CD8-positive, alpha-beta T cell (primary cell): ENCODE measurements at regions of chr12 and their contacts with region 1.

Region 1: DNA sequence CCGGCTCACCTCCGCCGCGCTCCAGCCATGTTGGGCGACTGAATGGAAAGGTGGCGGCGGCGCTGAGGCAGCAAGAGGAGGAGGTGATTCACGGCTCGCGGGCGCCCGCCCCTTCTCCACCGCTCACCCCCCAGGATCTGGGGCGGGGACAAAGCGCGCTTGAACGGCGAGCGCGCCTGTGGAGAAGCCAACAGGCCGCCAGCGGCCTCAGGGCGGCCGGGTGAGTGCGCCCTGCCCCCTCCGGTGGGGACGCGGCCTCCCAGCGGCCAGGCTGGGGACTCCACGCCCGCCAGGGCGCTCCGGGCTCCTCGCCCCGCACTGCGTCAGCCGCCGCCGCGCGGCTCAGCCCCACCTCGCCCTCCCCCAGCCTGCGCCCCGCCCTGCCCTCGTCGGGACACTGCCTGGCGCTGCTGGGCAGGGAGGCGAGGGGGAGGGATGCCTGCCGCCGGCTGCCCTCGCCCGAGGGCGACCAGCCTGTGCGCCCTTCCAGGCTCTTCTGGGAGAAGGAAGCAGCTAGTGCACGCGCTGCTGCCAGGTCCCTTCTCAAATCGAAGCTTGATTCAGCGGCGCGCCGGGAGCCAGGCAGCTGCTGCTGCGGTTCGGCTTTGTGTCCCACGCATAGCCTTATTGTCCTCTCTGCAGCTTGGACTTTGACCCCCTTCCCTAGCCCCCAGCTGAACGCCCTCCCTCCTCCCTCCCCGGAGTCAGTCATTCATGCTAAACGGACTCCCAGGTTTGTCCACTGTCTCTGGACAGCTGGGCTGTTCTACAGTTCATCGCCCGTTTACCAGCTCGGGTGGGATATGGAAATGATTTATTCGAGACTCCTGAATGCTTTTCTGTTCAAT is at the start of gene KIF21A:
- DNase-seq: peak; percentile 78 to 96 (median 86)
- ATAC-seq: peak; percentile 87
- H3K4me3 ChIP-seq: peak within 1 kb of the TSS; percentile 74 to 84
- H3K4me3 Mint-ChIP-seq: peak within 1 kb of the TSS; percentile 96
- H3K27ac ChIP-seq: peak within 1 kb of the TSS; percentile 55 to 74
- H3K27ac Mint-ChIP-seq: peak within 1 kb of the TSS; percentile 90
- H3K4me1 ChIP-seq: peaks cover 16% of the 10 kb centered on the region
- H3K4me1 Mint-ChIP-seq: peaks cover 18% of the 10 kb centered on the region
- H3K27me3 ChIP-seq: no peaks in the 10 kb centered on the region
- H3K27me3 Mint-ChIP-seq: peaks cover 6% of the 10 kb centered on the region
- CTCF ChIP-seq: peak; percentile 35
- total RNA-seq, gene KIF21A: 5.1 to 6.0 TPM

Region 2: DNA sequence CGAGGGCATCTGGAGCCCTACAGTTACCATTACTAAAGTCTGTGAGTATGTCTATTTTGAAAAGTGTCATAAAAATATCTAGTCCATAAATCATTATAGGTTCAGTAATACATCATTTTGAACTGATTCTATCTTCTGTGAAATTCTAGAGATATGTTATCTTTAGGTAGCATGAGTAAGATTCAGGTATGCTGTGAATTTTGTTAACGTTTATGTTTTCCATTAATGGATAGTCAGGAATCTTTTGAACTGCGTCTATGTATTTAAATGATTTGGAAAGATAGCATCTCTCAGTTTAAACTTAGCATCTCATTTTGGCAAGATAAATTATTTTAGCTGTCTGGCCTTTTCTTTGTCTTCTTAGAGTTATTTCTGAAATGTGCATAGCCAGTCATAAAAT is 1118.4 kb before region 1 on chr12:
- CTCF ChIA-PET with region 1: no interaction called
- POLR2A ChIA-PET with region 1: no interaction called
- intact Hi-C with region 1: loop called in 1 of 2 experiments (anchors 10 kb)
- DNase-seq: no peak
- ATAC-seq: no peak
- H3K4me3 ChIP-seq: no peak overlapping the region
- H3K4me3 Mint-ChIP-seq: no peak overlapping the region
- H3K27ac ChIP-seq: no peak overlapping the region
- H3K27ac Mint-ChIP-seq: no peak overlapping the region
- H3K4me1 ChIP-seq: no peaks in the 10 kb centered on the region
- H3K4me1 Mint-ChIP-seq: peaks cover 5% of the 10 kb centered on the region
- H3K27me3 ChIP-seq: no peaks in the 10 kb centered on the region
- H3K27me3 Mint-ChIP-seq: no peaks in the 10 kb centered on the region
- CTCF ChIP-seq: no peak

Region 3: GRCh38 chr12:38646146-38646545 is 797.2 kb before region 1 on chr12:
- CTCF ChIA-PET with region 1: no interaction called
- POLR2A ChIA-PET with region 1: no interaction called
- intact Hi-C with region 1: no loop called
- DNase-seq: no peak
- ATAC-seq: no peak
- H3K4me3 ChIP-seq: no peak overlapping the region
- H3K4me3 Mint-ChIP-seq: no peak overlapping the region
- H3K27ac ChIP-seq: no peak overlapping the region
- H3K27ac Mint-ChIP-seq: no peak overlapping the region
- H3K4me1 ChIP-seq: no peaks in the 10 kb centered on the region
- H3K4me1 Mint-ChIP-seq: no peaks in the 10 kb centered on the region
- H3K27me3 ChIP-seq: no peaks in the 10 kb centered on the region
- H3K27me3 Mint-ChIP-seq: no peaks in the 10 kb centered on the region
- CTCF ChIP-seq: no peak

Region 4: DNA sequence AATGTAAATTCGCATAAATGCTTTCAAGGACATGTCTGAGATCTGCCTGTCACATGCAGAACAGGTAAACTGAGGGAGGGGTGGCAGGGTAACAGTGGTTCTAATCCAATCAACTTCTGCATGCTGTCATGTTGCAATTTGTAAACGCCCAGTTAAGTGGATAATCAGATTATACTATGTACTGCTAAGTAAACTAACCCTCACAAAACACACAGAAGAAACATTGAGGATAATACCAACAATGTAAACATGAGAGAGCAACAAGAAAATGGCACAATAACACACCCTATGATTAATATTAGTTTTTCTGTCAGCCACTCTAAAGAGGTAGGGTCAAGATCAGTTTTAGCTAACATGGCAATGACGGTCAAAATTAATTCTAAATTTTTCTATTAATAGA is 124.1 kb before region 1 on chr12:
- CTCF ChIA-PET with region 1: no interaction called
- POLR2A ChIA-PET with region 1: no interaction called
- intact Hi-C with region 1: loop called in 1 of 2 experiments (anchors 1 kb)
- DNase-seq: no peak
- ATAC-seq: no peak
- H3K4me3 ChIP-seq: no peak overlapping the region
- H3K4me3 Mint-ChIP-seq: no peak overlapping the region
- H3K27ac ChIP-seq: no peak overlapping the region
- H3K27ac Mint-ChIP-seq: no peak overlapping the region
- H3K4me1 ChIP-seq: no peaks in the 10 kb centered on the region
- H3K4me1 Mint-ChIP-seq: no peaks in the 10 kb centered on the region
- H3K27me3 ChIP-seq: no peaks in the 10 kb centered on the region
- H3K27me3 Mint-ChIP-seq: no peaks in the 10 kb centered on the region
- CTCF ChIP-seq: no peak

Region 5: GRCh38 chr12:39329018-39329417 is 114.3 kb before region 1 on chr12:
- CTCF ChIA-PET with region 1: no interaction called
- POLR2A ChIA-PET with region 1: interaction called, 10 read pairs
- intact Hi-C with region 1: no loop called
- DNase-seq: no peak
- ATAC-seq: no peak
- H3K4me3 ChIP-seq: no peak overlapping the region
- H3K4me3 Mint-ChIP-seq: no peak overlapping the region
- H3K27ac ChIP-seq: no peak overlapping the region
- H3K27ac Mint-ChIP-seq: no peak overlapping the region
- H3K4me1 ChIP-seq: peaks cover 10% of the 10 kb centered on the region
- H3K4me1 Mint-ChIP-seq: peaks cover 15% of the 10 kb centered on the region
- H3K27me3 ChIP-seq: no peaks in the 10 kb centered on the region
- H3K27me3 Mint-ChIP-seq: no peaks in the 10 kb centered on the region
- CTCF ChIP-seq: no peak

Region 6: DNA sequence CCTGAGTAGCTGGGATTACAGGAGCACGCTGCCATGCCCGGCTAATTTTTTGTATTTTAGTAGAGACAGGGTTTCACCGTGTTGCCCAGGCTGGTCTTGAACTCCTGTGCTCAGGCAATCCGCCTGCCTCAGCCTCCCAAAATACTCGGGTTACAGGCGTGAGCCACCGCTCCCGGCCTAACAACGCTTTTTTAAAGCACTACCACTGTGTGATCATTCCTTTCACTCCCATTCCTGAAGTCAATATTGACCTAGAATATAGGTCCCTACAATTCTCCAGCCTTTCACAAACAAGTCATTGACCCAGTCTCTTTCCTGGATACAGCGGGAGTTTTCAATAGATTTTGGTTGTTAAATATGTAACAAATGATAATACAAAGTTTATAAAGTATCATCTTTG is 63.2 kb before region 1 on chr12:
- CTCF ChIA-PET with region 1: no interaction called
- POLR2A ChIA-PET with region 1: no interaction called
- intact Hi-C with region 1: loop called in 1 of 2 experiments (anchors 5 kb)
- DNase-seq: no peak
- ATAC-seq: no peak
- H3K4me3 ChIP-seq: no peak overlapping the region
- H3K4me3 Mint-ChIP-seq: no peak overlapping the region
- H3K27ac ChIP-seq: no peak overlapping the region
- H3K27ac Mint-ChIP-seq: no peak overlapping the region
- H3K4me1 ChIP-seq: no peaks in the 10 kb centered on the region
- H3K4me1 Mint-ChIP-seq: no peaks in the 10 kb centered on the region
- H3K27me3 ChIP-seq: no peaks in the 10 kb centered on the region
- H3K27me3 Mint-ChIP-seq: no peaks in the 10 kb centered on the region
- CTCF ChIP-seq: no peak

Region 7: GRCh38 chr12:39476118-39476517 is 32.8 kb after region 1 on chr12:
- CTCF ChIA-PET with region 1: no interaction called
- POLR2A ChIA-PET with region 1: no interaction called
- intact Hi-C with region 1: no loop called
- DNase-seq: peak in 2 of 9 experiments; percentile 5 to 7
- ATAC-seq: no peak
- H3K4me3 ChIP-seq: no peak overlapping the region
- H3K4me3 Mint-ChIP-seq: no peak overlapping the region
- H3K27ac ChIP-seq: no peak overlapping the region
- H3K27ac Mint-ChIP-seq: no peak overlapping the region
- H3K4me1 ChIP-seq: no peaks in the 10 kb centered on the region
- H3K4me1 Mint-ChIP-seq: no peaks in the 10 kb centered on the region
- H3K27me3 ChIP-seq: no peaks in the 10 kb centered on the region
- H3K27me3 Mint-ChIP-seq: no peaks in the 10 kb centered on the region
- CTCF ChIP-seq: no peak

Region 8: GRCh38 chr12:39682689-39683477 is 239.6 kb after region 1 on chr12:
- CTCF ChIA-PET with region 1: no interaction called
- POLR2A ChIA-PET with region 1: no interaction called
- intact Hi-C with region 1: loop called in 1 of 2 experiments (anchors 10 kb)
- DNase-seq: peak in 2 of 9 experiments; percentile 52 to 75
- ATAC-seq: peak; percentile 88
- H3K4me3 ChIP-seq: peak overlapping the region; percentile 24 to 44
- H3K4me3 Mint-ChIP-seq: peak overlapping the region; percentile 88
- H3K27ac ChIP-seq: peak overlapping the region; percentile 57 to 86
- H3K27ac Mint-ChIP-seq: peak overlapping the region; percentile 98
- H3K4me1 ChIP-seq: peaks cover 23% of the 10 kb centered on the region
- H3K4me1 Mint-ChIP-seq: peaks cover 29% of the 10 kb centered on the region
- H3K27me3 ChIP-seq: no peaks in the 10 kb centered on the region
- H3K27me3 Mint-ChIP-seq: no peaks in the 10 kb centered on the region
- CTCF ChIP-seq: no peak

Region 9: GRCh38 chr12:39692258-39692853 is 249.1 kb after region 1 on chr12:
- CTCF ChIA-PET with region 1: no interaction called
- POLR2A ChIA-PET with region 1: interaction called, 5 read pairs
- intact Hi-C with region 1: loop called (anchors 5 to 10 kb)
- DNase-seq: peak in 2 of 9 experiments; percentile 23 to 47
- ATAC-seq: peak; percentile 58
- H3K4me3 ChIP-seq: no peak overlapping the region
- H3K4me3 Mint-ChIP-seq: no peak overlapping the region
- H3K27ac ChIP-seq: no peak overlapping the region
- H3K27ac Mint-ChIP-seq: no peak overlapping the region
- H3K4me1 ChIP-seq: peaks cover 7% of the 10 kb centered on the region
- H3K4me1 Mint-ChIP-seq: peaks cover 6% of the 10 kb centered on the region
- H3K27me3 ChIP-seq: no peaks in the 10 kb centered on the region
- H3K27me3 Mint-ChIP-seq: no peaks in the 10 kb centered on the region
- CTCF ChIP-seq: peak; percentile 61